Heart right ventricle (tissue), 16 donors: ENCODE measurements at regions of chr19 and their contacts with region 1.

Region 1: DNA sequence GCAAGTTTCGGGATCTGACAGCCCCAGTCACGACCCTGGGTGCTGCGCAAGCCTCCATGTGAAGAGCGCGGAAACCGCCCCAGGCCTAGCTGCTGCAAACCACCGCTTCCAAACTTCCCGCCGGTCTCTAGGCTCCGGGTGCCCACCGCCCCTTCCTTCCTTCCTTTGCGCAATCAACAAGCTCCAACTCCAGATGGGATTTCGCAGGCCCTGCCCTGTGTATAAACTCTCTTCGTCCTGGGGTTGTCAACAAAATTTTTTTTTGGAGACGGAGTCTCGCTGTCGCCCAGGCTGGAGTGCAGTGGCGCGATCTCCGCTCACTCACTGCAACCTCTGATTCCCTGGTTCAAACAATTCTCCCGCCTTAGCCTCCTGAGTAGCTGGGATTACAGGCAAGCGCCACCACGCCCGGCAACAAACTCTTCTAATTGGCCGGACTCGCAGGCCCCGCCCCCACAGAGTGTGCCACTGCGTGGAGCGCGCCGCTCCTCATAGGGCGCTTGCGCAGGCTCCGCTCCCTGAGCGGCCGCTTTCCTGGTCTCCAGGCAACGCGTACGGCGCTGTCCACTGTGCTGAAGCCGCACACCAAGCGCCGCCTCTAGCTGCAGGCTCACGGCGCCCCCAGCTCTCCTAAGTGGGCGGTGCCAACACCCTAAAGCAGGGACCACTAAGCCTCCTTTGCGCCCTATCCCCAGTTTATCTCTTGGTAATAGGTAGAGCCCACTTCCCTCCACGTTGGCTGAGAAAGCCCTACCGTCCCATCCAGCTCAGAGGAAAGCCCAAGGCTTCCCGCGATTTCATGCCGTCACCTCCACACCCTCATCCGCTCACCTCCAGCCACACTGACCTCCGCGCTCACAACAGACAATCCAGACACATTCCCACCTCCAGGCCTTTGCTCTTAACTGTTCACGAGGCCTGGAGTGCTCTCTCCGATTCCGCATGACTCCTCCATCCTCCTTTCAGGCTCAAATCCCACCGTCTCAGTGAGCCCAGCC is 5.5 kb upstream of the QTRT1 start:
- DNase-seq: peak; percentile 91 to 94
- ATAC-seq: peak; percentile 97 to 99 (median 98)
- H3K4me3 ChIP-seq: peak overlapping the region in 7 of 10 donors; percentile 20 to 44 (median 35)
- H3K27ac ChIP-seq: no peak overlapping the region
- H3K4me1 ChIP-seq: peaks cover 0 to 18% (median 13%) of the 10 kb centered on the region in 9 donors
- H3K27me3 ChIP-seq: no peaks in the 10 kb centered on the region
- CTCF ChIP-seq: no peak

Region 2: GRCh38 chr19:10486538-10486937 is 209.2 kb before region 1 on chr19:
- intact Hi-C with region 1: loop called in 1 of 10 experiments (anchors 10 kb)
- DNase-seq: no peak
- ATAC-seq: no peak
- H3K4me3 ChIP-seq: no peak overlapping the region
- H3K27ac ChIP-seq: no peak overlapping the region
- H3K4me1 ChIP-seq: peaks cover 0 to 12% (median 0%) of the 10 kb centered on the region in 9 donors
- H3K27me3 ChIP-seq: no peaks in the 10 kb centered on the region
- CTCF ChIP-seq: no peak

Region 3: GRCh38 chr19:10502524-10503001 is 193.1 kb before region 1 on chr19:
- intact Hi-C with region 1: no loop called
- DNase-seq: peak; percentile 94 to 95
- ATAC-seq: peak; percentile 93 to 98 (median 96)
- H3K4me3 ChIP-seq: peak overlapping the region; percentile 57 to 99 (median 95)
- H3K27ac ChIP-seq: peak overlapping the region; percentile 92 to 100 (median 99)
- H3K4me1 ChIP-seq: peaks cover 5 to 56% (median 35%) of the 10 kb centered on the region in 9 donors
- H3K27me3 ChIP-seq: no peaks in the 10 kb centered on the region
- CTCF ChIP-seq: peak in 2 of 9 donors; percentile 7 to 26

Region 4: GRCh38 chr19:10565567-10566407 is 129.9 kb before region 1 on chr19 and contains the start of gene KRI1:
- intact Hi-C with region 1: loop called in 1 of 10 experiments (anchors 5 kb)
- DNase-seq: peak; percentile 98 to 99
- ATAC-seq: peak; percentile 85 to 92 (median 88)
- H3K4me3 ChIP-seq: peak within 1 kb of the TSS; percentile 62 to 94 (median 84)
- H3K27ac ChIP-seq: peak within 1 kb of the TSS; percentile 72 to 94 (median 90)
- H3K4me1 ChIP-seq: peaks cover 4 to 45% (median 39%) of the 10 kb centered on the region in 9 donors
- H3K27me3 ChIP-seq: no peaks in the 10 kb centered on the region
- CTCF ChIP-seq: peak in 7 of 9 donors; percentile 16 to 50 (median 30)
- total RNA-seq, gene KRI1: 8.4 to 14.2 (median 10.3) TPM

Region 5: DNA sequence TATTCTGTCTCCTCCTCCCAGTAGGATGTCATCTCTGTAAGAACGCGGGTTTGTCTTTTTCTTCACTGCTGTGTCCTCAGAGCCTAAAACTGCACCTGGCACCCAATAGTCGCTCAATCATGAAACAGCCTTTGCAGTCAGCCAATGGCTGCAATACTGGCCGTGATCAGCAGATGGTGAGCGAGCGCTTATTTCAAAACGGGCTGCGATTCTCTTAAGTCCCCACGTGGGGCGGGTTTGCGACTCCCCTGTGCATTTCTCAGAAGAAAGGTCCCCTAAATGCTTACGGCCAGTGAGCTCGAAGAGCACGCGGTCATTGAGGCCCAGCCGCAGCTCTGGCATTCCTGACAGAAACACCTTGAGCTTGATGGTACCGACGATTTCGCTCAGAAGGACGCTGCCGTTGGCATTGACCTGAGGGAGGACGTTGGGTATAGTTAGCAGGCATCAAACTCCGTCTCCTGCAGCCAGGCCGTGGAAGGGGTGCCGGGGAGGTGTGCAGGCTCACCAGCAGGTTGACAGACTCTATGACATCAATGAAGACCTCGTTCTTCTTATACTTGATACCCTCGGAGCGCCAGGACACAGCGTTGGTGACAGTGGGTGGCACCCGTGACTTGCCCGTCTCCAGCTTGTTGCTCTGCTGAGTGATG is 114.6 kb before region 1 on chr19:
- intact Hi-C with region 1: loop called in 7 of 10 experiments (anchors 2 to 5 kb)
- DNase-seq: peak; percentile 84 to 88
- ATAC-seq: peak; percentile 74 to 93 (median 86)
- H3K4me3 ChIP-seq: peak overlapping the region in 4 of 10 donors; percentile 11 to 26 (median 18)
- H3K27ac ChIP-seq: no peak overlapping the region
- H3K4me1 ChIP-seq: peaks cover 0 to 13% (median 0%) of the 10 kb centered on the region in 9 donors
- H3K27me3 ChIP-seq: peaks cover 0 to 5% (median 0%) of the 10 kb centered on the region in 7 donors
- CTCF ChIP-seq: peak; percentile 97 to 100 (median 98)

Region 6: GRCh38 chr19:10644260-10645007 is 51.3 kb before region 1 on chr19:
- intact Hi-C with region 1: loop called in 1 of 10 experiments (anchors 5 kb)
- DNase-seq: peak; percentile 89 to 90
- ATAC-seq: peak; percentile 78 to 95 (median 91)
- H3K4me3 ChIP-seq: no peak overlapping the region
- H3K27ac ChIP-seq: peak overlapping the region; percentile 27 to 69 (median 58)
- H3K4me1 ChIP-seq: peaks cover 6 to 45% (median 27%) of the 10 kb centered on the region in 9 donors
- H3K27me3 ChIP-seq: no peaks in the 10 kb centered on the region
- CTCF ChIP-seq: peak; percentile 76 to 94 (median 88)

Region 7: DNA sequence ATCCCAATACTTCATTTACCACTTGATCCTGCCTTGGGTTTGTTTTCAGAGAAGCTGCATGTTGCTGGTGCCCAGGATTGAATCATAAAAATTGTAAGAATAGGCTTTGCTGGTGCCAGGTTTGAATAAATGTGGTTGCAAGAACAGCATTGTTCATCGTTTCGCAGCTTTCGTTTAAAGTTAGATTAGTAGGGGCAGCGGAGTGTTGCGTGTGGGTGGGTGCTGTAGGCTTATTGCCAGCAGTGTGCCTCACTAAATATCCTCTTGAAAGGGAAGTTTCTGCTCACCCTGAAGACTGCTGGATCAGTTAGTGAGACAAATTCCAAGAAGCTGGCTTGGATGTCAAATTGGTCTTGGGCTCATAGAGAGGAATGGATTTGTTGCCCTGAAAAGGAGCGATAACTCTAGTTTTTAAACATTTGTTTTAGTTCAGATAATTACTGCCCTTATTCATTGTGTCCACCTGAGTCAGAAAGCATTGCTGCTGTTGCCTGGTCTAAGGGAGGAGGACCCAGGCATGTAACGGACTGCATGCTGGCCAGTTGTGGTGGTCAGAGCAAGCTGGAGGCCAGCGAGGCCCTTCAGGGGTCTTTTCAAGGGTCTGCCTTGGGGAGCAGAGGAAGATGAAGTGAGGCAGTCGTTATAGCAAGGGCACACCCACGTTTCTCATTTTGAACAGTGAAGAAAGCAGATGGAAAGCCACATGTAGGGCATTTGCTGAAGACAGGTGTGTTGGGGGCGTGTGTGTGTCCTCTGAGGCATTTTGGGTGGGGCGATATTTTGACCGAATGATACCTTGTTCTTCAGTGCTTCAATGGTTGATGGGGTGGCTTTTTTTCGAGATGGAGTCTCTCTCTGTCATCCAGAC is 33.1 kb before region 1 on chr19:
- intact Hi-C with region 1: loop called in 2 of 10 experiments (anchors 5 kb)
- DNase-seq: no peak
- ATAC-seq: no peak
- H3K4me3 ChIP-seq: no peak overlapping the region
- H3K27ac ChIP-seq: no peak overlapping the region
- H3K4me1 ChIP-seq: peaks cover 8 to 77% (median 60%) of the 10 kb centered on the region in 9 donors
- H3K27me3 ChIP-seq: no peaks in the 10 kb centered on the region
- CTCF ChIP-seq: no peak

Region 8: GRCh38 chr19:10870955-10871603 is 175.4 kb after region 1 on chr19 and contains the start of gene CARM1:
- intact Hi-C with region 1: no loop called
- DNase-seq: peak; percentile 99 to 100
- ATAC-seq: peak; percentile 95 to 97 (median 96)
- H3K4me3 ChIP-seq: peak within 1 kb of the TSS; percentile 55 to 99 (median 70)
- H3K27ac ChIP-seq: peak within 1 kb of the TSS; percentile 64 to 90 (median 80)
- H3K4me1 ChIP-seq: peaks cover 5 to 55% (median 21%) of the 10 kb centered on the region in 9 donors
- H3K27me3 ChIP-seq: no peaks in the 10 kb centered on the region
- CTCF ChIP-seq: peak; percentile 40 to 88 (median 68)
- total RNA-seq, gene CARM1: 25.8 to 45.4 (median 28.8) TPM